ENCODE measurements at regions of chr1 and their contacts with region 1.

Region 1: GRCh38 chr1:26321315-26322041 is 3.7 kb downstream of the CD52 start:
- DNase-seq: peak; percentile 85 to 94 (median 90)
- H3K4me3 ChIP-seq: peak overlapping the region; percentile 93
- H3K4me3 Mint-ChIP-seq: peak overlapping the region; percentile 75 to 99 (median 91)
- H3K27ac ChIP-seq: no peak overlapping the region
- H3K27ac Mint-ChIP-seq: peak overlapping the region; percentile 41 to 100 (median 95)
- H3K4me1 ChIP-seq: peaks cover 46% of the 10 kb centered on the region
- H3K4me1 Mint-ChIP-seq: peaks cover 47 to 63% (median 53%) of the 10 kb centered on the region in 3 donors
- H3K27me3 ChIP-seq: no peaks in the 10 kb centered on the region
- H3K27me3 Mint-ChIP-seq: peaks cover 0 to 2% of the 10 kb centered on the region in 2 donors

Region 2: GRCh38 chr1:26279456-26280332 is 41.8 kb before region 1 on chr1 and contains the start of gene SH3BGRL3:
- CTCF ChIA-PET with region 1: interaction called, 840 read pairs
- POLR2A ChIA-PET with region 1: interaction called, 287 read pairs
- DNase-seq: peak; percentile 80 to 88 (median 85)
- H3K4me3 ChIP-seq: peak within 1 kb of the TSS; percentile 85
- H3K4me3 Mint-ChIP-seq: peak within 1 kb of the TSS; percentile 82 to 97 (median 93)
- H3K27ac ChIP-seq: peak within 1 kb of the TSS; percentile 86
- H3K27ac Mint-ChIP-seq: peak within 1 kb of the TSS; percentile 88 to 99 (median 96)
- H3K4me1 ChIP-seq: peaks cover 86% of the 10 kb centered on the region
- H3K4me1 Mint-ChIP-seq: peaks cover 78 to 87% (median 83%) of the 10 kb centered on the region in 3 donors
- H3K27me3 ChIP-seq: no peaks in the 10 kb centered on the region
- H3K27me3 Mint-ChIP-seq: no peaks in the 10 kb centered on the region
- total RNA-seq, gene SH3BGRL3: 447 to 472 TPM

Region 3: GRCh38 chr1:26358411-26359384 is 37.2 kb after region 1 on chr1:
- CTCF ChIA-PET with region 1: interaction called, 14 read pairs
- POLR2A ChIA-PET with region 1: interaction called, 6 read pairs
- DNase-seq: peak; percentile 61 to 87 (median 75)
- H3K4me3 ChIP-seq: peak overlapping the region; percentile 23
- H3K4me3 Mint-ChIP-seq: peak overlapping the region; percentile 60 to 84 (median 69)
- H3K27ac ChIP-seq: no peak overlapping the region
- H3K27ac Mint-ChIP-seq: peak overlapping the region; percentile 61 to 91 (median 78)
- H3K4me1 ChIP-seq: peaks cover 36% of the 10 kb centered on the region
- H3K4me1 Mint-ChIP-seq: peaks cover 44 to 60% (median 47%) of the 10 kb centered on the region in 3 donors
- H3K27me3 ChIP-seq: peaks cover 14% of the 10 kb centered on the region
- H3K27me3 Mint-ChIP-seq: peaks cover 11 to 21% of the 10 kb centered on the region in 2 donors

Region 4: GRCh38 chr1:26373281-26373680 is 51.8 kb after region 1 on chr1:
- CTCF ChIA-PET with region 1: interaction called, 11 read pairs
- POLR2A ChIA-PET with region 1: interaction called, 6 read pairs
- DNase-seq: peak; percentile 27 to 69 (median 51)
- H3K4me3 ChIP-seq: peak overlapping the region; percentile 3
- H3K4me3 Mint-ChIP-seq: peak overlapping the region; percentile 1 to 71 (median 55)
- H3K27ac ChIP-seq: no peak overlapping the region
- H3K27ac Mint-ChIP-seq: peak overlapping the region; percentile 48 to 93 (median 80)
- H3K4me1 ChIP-seq: peaks cover 90% of the 10 kb centered on the region
- H3K4me1 Mint-ChIP-seq: peaks cover 81 to 92% (median 90%) of the 10 kb centered on the region in 3 donors
- H3K27me3 ChIP-seq: no peaks in the 10 kb centered on the region
- H3K27me3 Mint-ChIP-seq: peaks cover 0 to 1% of the 10 kb centered on the region in 2 donors

Region 5: GRCh38 chr1:26431979-26432695 is 110.7 kb after region 1 on chr1 and contains the start of gene DHDDS:
- CTCF ChIA-PET with region 1: no interaction called
- POLR2A ChIA-PET with region 1: no interaction called
- DNase-seq: peak; percentile 96 to 98 (median 97)
- H3K4me3 ChIP-seq: peak within 1 kb of the TSS; percentile 69
- H3K4me3 Mint-ChIP-seq: peak within 1 kb of the TSS; percentile 90 to 98 (median 94)
- H3K27ac ChIP-seq: peak within 1 kb of the TSS; percentile 70
- H3K27ac Mint-ChIP-seq: peak within 1 kb of the TSS; percentile 75 to 99 (median 96)
- H3K4me1 ChIP-seq: peaks cover 19% of the 10 kb centered on the region
- H3K4me1 Mint-ChIP-seq: peaks cover 19 to 24% (median 24%) of the 10 kb centered on the region in 3 donors
- H3K27me3 ChIP-seq: no peaks in the 10 kb centered on the region
- H3K27me3 Mint-ChIP-seq: peaks cover 0 to 6% of the 10 kb centered on the region in 2 donors
- total RNA-seq, gene DHDDS: 47.9 to 52.2 TPM